ENCODE measurements at regions of chr6 and their contacts with region 1.

Region 1: GRCh38 chr6:52664186-52664990 is 6.5 kb upstream of the TMEM14A start:
- DNase-seq: peak; percentile 81
- H3K4me3 Mint-ChIP-seq: no peak overlapping the region
- H3K27ac Mint-ChIP-seq: no peak overlapping the region
- H3K4me1 Mint-ChIP-seq: peaks cover 17% of the 10 kb centered on the region
- H3K27me3 Mint-ChIP-seq: no peaks in the 10 kb centered on the region

Region 2: GRCh38 chr6:52407467-52407866 is 256.9 kb before region 1 on chr6:
- CTCF ChIA-PET with region 1: interaction called, 19 read pairs
- POLR2A ChIA-PET with region 1: no interaction called
- DNase-seq: no peak
- H3K4me3 Mint-ChIP-seq: no peak overlapping the region
- H3K27ac Mint-ChIP-seq: no peak overlapping the region
- H3K4me1 Mint-ChIP-seq: peaks cover 5% of the 10 kb centered on the region
- H3K27me3 Mint-ChIP-seq: peaks cover 1% of the 10 kb centered on the region

Region 3: GRCh38 chr6:52419809-52420670 is 244.3 kb before region 1 on chr6 and contains the start of gene EFHC1:
- CTCF ChIA-PET with region 1: interaction called, 44 read pairs
- POLR2A ChIA-PET with region 1: no interaction called
- DNase-seq: peak; percentile 98
- H3K4me3 Mint-ChIP-seq: no peak within 1 kb of the TSS
- H3K27ac Mint-ChIP-seq: peak within 1 kb of the TSS; percentile 33
- H3K4me1 Mint-ChIP-seq: peaks cover 20% of the 10 kb centered on the region
- H3K27me3 Mint-ChIP-seq: peaks cover 6% of the 10 kb centered on the region
- total RNA-seq, gene EFHC1: 1.6 to 3.4 TPM

Measured in activated CD4-positive, alpha-beta memory T cell treated with anti-CD3 and anti-CD28 coated beads, Interleukin-2, amount 10 ng/mL, durations not matched to agents 7 days and 5 days (primary cell).